ENCODE measurements at regions of chr11 and their contacts with region 1.

Region 1: DNA sequence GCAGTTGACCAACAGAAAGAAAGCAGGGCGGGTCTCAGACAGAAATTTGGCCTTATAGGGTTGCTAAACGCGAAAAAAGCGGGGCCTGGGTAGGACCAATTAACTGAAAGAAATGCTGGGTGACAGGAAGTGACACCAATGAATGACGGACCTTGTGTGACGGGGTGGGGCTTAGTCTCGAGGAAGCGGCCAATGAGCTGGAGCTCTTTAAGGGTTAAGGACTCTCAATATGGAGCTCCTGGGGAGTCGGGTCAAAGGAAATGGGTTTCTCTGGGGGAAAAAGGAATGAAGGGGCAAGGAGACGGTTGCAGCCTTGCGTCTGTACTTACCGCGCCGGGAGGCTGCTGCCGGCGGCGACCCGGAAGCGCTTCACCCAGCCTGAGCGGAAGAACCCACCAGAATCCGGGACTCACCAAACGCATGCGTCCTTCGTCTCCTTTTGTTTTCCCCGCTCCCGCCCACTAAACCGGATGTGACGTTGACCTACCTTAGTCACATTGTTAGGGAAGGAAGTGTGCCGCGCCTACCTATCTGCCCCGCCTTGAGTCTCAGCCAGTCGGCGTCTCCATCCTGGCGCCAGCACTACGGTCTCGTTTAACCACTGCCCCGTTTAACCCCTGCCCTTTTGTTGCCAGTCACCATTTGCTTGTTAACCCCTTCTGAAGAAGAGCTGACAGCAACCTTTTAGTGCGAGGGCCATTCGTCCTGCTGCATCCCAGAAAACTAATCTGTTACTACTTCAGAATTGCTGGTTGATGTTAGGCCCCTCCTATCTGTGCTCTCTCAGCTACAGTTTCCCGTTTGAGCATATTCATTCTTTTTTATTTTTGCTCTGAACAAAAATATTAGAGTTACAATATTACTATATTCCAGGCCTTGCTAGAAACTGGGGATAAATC is at the start of gene ANAPC15:
- DNase-seq: peak; percentile 99
- H3K4me3 Mint-ChIP-seq: peak within 1 kb of the TSS; percentile 80
- H3K27ac Mint-ChIP-seq: peak within 1 kb of the TSS; percentile 92
- H3K4me1 Mint-ChIP-seq: peaks cover 22% of the 10 kb centered on the region
- H3K27me3 Mint-ChIP-seq: no peaks in the 10 kb centered on the region
- total RNA-seq, gene ANAPC15: 53.0 to 58.7 TPM

Region 2: GRCh38 chr11:71928737-71929452 is 183.7 kb before region 1 on chr11 and contains the start of gene RNF121:
- CTCF ChIA-PET with region 1: no interaction called
- POLR2A ChIA-PET with region 1: interaction called, 47 read pairs
- DNase-seq: peak; percentile 98
- H3K4me3 Mint-ChIP-seq: peak within 1 kb of the TSS; percentile 95
- H3K27ac Mint-ChIP-seq: peak within 1 kb of the TSS; percentile 94
- H3K4me1 Mint-ChIP-seq: peaks cover 51% of the 10 kb centered on the region
- H3K27me3 Mint-ChIP-seq: no peaks in the 10 kb centered on the region
- total RNA-seq, gene RNF121: 25.7 to 28.1 TPM

Region 3: GRCh38 chr11:72040726-72041441 is 71.7 kb before region 1 on chr11:
- CTCF ChIA-PET with region 1: no interaction called
- POLR2A ChIA-PET with region 1: interaction called, 32 read pairs
- DNase-seq: peak; percentile 70
- H3K4me3 Mint-ChIP-seq: no peak overlapping the region
- H3K27ac Mint-ChIP-seq: no peak overlapping the region
- H3K4me1 Mint-ChIP-seq: peaks cover 8% of the 10 kb centered on the region
- H3K27me3 Mint-ChIP-seq: no peaks in the 10 kb centered on the region

Region 4: DNA sequence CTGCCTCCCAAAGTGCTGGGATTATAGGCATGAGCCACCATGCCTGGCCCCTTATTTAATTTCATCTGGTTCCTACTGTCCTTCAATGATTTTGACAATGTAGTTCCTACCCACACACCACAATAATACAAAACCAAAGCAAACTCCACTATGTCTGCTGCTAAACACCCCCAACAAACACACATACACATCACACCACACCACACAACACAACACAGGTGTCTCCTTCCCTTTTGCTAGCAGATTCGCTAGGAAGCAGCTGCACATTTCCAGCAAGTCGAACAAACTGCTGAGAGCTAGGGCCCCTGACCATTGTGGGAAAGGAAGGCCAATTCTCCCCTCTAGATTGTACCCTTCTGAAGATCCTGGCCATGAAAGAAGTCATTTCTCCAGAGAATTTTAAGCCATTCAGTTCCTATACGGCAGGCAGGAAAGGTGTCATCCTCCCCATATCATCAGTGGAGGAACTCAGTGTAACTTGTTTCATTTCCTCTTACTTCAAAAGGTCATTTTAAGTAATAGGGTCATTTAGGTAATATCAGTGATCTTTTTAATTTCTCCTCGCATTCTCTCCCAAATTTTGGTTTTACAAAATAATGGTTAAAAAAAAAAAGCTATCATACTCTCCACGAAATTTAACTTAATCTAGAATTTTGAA is 50.7 kb before region 1 on chr11:
- CTCF ChIA-PET with region 1: no interaction called
- POLR2A ChIA-PET with region 1: no interaction called
- DNase-seq: no peak
- H3K4me3 Mint-ChIP-seq: no peak overlapping the region
- H3K27ac Mint-ChIP-seq: no peak overlapping the region
- H3K4me1 Mint-ChIP-seq: peaks cover 11% of the 10 kb centered on the region
- H3K27me3 Mint-ChIP-seq: no peaks in the 10 kb centered on the region

Region 5: DNA sequence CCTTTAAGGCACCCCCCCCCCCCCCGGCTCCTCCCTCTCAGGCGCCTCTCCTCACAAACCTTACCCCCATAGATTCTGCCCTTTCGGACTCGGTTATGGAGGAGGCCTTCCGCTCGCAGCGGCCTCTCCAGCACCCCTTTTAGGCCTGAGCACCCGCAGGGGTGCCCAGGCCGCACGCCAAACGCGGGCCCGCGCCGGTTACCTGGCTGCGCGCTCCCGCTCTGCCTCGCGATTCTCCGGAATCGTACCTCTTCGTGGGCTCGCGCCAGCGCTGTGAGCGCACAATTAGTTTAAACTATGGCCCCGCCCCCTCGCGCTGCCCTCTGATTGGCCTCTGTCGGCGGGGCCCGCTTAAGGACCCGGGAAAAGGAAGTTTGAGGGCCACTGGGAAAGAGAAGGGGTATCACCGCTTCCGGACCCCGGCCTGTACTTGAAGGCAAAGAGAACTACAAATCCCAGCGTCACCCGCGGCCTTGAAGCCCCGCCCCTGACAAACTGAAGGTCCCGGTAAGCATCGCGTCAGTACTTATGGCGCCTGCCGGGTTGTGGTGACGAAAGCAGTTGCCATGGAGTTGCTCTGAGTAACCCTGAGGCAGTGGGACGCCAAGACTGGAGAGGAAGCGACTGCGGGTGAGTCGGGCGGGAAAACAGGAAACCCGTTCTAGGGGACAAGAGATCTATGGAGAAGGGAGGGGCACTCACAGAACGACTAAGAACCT is 32.2 kb before region 1 on chr11 and contains the starts of genes LRRC51 and NUMA1:
- CTCF ChIA-PET with region 1: no interaction called
- POLR2A ChIA-PET with region 1: interaction called, 19 read pairs
- DNase-seq: peak; percentile 100
- H3K4me3 Mint-ChIP-seq: peak within 1 kb of the TSS; percentile 88
- H3K27ac Mint-ChIP-seq: peak within 1 kb of the TSS; percentile 90
- H3K4me1 Mint-ChIP-seq: peaks cover 58% of the 10 kb centered on the region
- H3K27me3 Mint-ChIP-seq: no peaks in the 10 kb centered on the region
- total RNA-seq, gene LRRC51: 5.9 to 7.1 TPM
- total RNA-seq, gene NUMA1: 200 to 201 TPM

Region 6: DNA sequence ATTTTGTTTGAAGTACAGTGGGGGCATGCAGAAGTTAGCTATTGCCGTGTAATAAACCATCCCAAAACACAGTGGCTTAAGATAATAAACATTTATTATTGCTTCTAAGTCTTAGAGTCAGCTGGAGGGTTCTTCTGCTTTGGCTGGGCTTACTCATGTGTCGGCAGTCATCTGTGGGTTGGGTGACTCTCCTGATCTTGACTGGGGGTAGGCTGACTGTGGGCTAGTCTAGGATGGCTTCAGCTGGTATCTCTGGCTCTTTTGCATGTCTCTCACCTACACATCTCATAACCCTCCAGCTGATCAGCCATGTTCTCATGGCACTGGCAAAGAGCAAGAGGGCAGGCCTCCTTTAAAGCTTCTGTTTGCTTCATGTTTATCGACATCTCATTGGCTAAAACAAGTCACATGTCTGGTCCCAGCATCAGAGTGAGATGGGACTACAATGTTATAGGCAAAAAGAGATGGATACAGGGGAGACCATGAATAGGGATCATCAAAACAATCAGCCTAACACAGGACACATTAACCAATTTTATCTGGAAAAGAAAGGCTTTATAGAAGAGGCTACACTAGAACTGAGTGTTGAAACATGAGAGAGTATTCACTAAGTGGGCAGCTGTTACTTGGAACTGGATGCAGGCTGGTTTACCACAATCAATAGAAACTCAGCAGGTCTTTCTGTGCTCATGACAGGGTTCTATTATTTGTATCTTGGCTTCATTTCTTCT is 26.8 kb before region 1 on chr11:
- CTCF ChIA-PET with region 1: no interaction called
- POLR2A ChIA-PET with region 1: interaction called, 19 read pairs
- DNase-seq: no peak
- H3K4me3 Mint-ChIP-seq: no peak overlapping the region
- H3K27ac Mint-ChIP-seq: no peak overlapping the region
- H3K4me1 Mint-ChIP-seq: peaks cover 40% of the 10 kb centered on the region
- H3K27me3 Mint-ChIP-seq: no peaks in the 10 kb centered on the region

Region 7: DNA sequence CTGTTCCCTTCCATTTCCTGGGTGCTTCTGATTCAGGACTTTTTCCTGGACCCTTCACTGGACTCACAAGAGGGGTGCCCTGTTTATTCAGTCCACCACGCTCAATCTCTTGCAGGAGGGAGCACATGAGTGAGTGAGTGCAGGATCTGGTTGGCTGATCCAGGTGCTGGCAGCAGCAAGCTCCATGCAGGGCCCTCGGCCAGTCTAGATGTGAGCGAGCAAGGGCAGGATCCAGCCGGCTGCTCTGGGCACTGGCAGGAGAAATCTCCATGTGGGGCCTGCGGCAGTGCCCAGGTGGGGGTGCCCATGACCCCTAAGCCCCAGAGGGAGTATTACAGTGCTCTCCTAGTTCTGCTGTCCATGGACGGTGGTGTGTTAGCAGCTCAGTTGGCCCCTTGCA is 11.5 kb after region 1 on chr11:
- CTCF ChIA-PET with region 1: no interaction called
- POLR2A ChIA-PET with region 1: interaction called, 11 read pairs
- DNase-seq: no peak
- H3K4me3 Mint-ChIP-seq: no peak overlapping the region
- H3K27ac Mint-ChIP-seq: no peak overlapping the region
- H3K4me1 Mint-ChIP-seq: no peaks in the 10 kb centered on the region
- H3K27me3 Mint-ChIP-seq: peaks cover 16% of the 10 kb centered on the region

Region 8: GRCh38 chr11:72222907-72223614 is 110.5 kb after region 1 on chr11:
- CTCF ChIA-PET with region 1: interaction called, 7 read pairs
- POLR2A ChIA-PET with region 1: interaction called, 15 read pairs
- DNase-seq: peak; percentile 96
- H3K4me3 Mint-ChIP-seq: peak overlapping the region; percentile 87
- H3K27ac Mint-ChIP-seq: peak overlapping the region; percentile 82
- H3K4me1 Mint-ChIP-seq: peaks cover 34% of the 10 kb centered on the region
- H3K27me3 Mint-ChIP-seq: peaks cover 7% of the 10 kb centered on the region

Region 9: GRCh38 chr11:72454791-72455190 is 342.2 kb after region 1 on chr11:
- CTCF ChIA-PET with region 1: no interaction called
- POLR2A ChIA-PET with region 1: no interaction called
- DNase-seq: no peak
- H3K4me3 Mint-ChIP-seq: no peak overlapping the region
- H3K27ac Mint-ChIP-seq: no peak overlapping the region
- H3K4me1 Mint-ChIP-seq: no peaks in the 10 kb centered on the region
- H3K27me3 Mint-ChIP-seq: peaks cover 10% of the 10 kb centered on the region

Measured in activated CD4-positive, alpha-beta memory T cell treated with anti-CD3 and anti-CD28 coated beads, Interleukin-2, amount 10 ng/mL, durations not matched to agents 7 days and 5 days (primary cell).